GM12878 (cell line): ENCODE measurements at regions of chr18 and their contacts with region 1.

Region 1: DNA sequence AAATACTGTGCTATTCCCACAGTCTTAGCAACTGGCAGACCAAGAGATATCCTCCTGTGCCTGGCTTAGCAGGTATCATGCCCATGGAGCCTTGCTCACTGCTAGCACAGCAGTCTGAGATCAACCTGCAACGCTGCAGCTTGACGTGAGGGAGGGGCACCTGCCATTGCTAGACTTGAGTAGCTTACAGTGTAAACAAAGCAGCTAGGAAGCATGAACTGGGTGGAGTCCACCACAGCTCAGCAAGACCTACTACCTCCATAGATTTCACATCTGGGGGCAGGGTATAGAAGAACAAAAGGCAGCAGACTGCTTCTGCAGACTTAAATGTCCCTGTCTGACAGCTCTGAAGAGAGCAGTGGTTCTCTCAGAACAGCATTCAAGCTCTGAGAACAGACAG is 74.8 kb downstream of the AKAIN1 start:
- DNase-seq: no peak
- ATAC-seq: no peak
- H3K4me3 ChIP-seq: no peak overlapping the region
- H3K27ac ChIP-seq: no peak overlapping the region
- H3K4me1 ChIP-seq: no peaks in the 10 kb centered on the region
- H3K27me3 ChIP-seq: no peaks in the 10 kb centered on the region
- CTCF ChIP-seq: no peak
- EP300 ChIP-seq: no peak
- POLR2A ChIP-seq: no peak
- RAD21 ChIP-seq: no peak

Region 2: GRCh38 chr18:4658804-4659203 is 463.5 kb before region 1 on chr18:
- CTCF ChIA-PET with region 1: no interaction called
- POLR2A ChIA-PET with region 1: no interaction called
- RAD21 ChIA-PET with region 1: no interaction called
- SMC1A ChIA-PET with region 1: no interaction called
- in situ Hi-C with region 1: no loop called
- intact Hi-C with region 1: no loop called
- DNase-seq: no peak
- ATAC-seq: no peak
- H3K4me3 ChIP-seq: no peak overlapping the region
- H3K27ac ChIP-seq: no peak overlapping the region
- H3K4me1 ChIP-seq: no peaks in the 10 kb centered on the region
- H3K27me3 ChIP-seq: no peaks in the 10 kb centered on the region
- CTCF ChIP-seq: no peak
- EP300 ChIP-seq: no peak
- POLR2A ChIP-seq: no peak
- RAD21 ChIP-seq: no peak

Region 3: DNA sequence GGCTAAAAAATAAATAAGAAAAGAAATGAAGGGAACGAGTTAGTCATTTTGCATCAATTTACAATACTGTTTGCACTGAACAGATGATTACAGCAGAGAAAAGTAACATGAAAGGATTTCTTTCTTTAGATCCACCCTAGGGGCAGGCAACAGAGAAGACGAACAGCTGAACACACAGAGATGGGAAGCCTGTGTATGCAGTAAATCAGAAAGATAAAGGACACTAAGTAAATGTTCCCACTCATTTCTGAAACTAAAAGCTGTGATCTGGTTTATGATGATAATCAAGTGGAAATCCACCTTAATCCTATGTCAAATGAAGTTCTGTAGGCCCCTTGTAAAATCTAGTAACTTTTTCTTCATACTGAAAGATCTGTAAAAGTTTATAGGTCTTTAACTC is 20.6 kb after region 1 on chr18:
- CTCF ChIA-PET with region 1: no interaction called
- POLR2A ChIA-PET with region 1: no interaction called
- RAD21 ChIA-PET with region 1: no interaction called
- SMC1A ChIA-PET with region 1: no interaction called
- in situ Hi-C with region 1: no loop called
- intact Hi-C with region 1: loop called (anchors 2 kb)
- DNase-seq: no peak
- ATAC-seq: no peak
- H3K4me3 ChIP-seq: no peak overlapping the region
- H3K27ac ChIP-seq: no peak overlapping the region
- H3K4me1 ChIP-seq: no peaks in the 10 kb centered on the region
- H3K27me3 ChIP-seq: peaks cover 0 to 2% of the 10 kb centered on the region in 2 experiments; a peak in 3 of 4 replicates
- CTCF ChIP-seq: no peak
- EP300 ChIP-seq: no peak
- POLR2A ChIP-seq: no peak
- RAD21 ChIP-seq: no peak